ENCODE measurements at regions of chr11 and their contacts with region 1.

Region 1: DNA sequence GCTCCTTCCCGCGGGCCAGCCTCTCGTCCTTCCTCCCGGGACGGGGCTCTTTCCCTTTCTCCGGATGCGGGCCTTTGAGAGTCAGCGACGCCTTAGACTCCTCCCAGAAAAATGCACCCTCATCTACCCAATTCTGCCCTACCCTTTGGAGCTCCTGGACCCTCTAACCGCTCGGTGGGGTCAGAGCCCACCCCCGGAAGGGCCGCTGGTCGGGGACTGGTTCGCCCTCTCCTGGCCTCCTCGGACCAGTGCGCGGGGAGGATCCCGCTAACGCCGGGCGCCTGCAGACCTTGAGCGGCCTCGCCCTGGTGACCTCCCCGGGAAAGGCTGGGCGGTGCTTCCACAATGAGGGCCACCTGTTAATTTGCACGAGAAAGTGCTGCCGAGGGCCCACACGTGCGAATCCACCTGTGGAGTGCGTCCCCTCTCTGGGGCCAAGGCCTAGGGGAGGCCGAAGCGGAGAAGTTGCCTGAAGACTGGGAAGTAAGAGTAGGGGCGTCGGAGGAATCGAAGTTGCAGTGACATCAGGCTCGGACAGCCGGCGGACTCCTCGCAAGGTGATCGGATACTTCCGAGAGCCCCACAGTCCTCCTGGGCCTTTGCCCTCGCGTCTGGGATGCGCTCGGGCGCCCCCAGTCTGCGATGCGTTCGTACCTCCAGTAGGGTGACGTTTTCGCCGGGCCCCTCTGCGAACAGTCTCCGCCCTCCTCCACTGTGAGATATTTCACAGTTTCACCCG is 61.5 kb downstream of the ENDOD1 start:
- DNase-seq: peak; percentile 78
- ATAC-seq: peak; percentile 89
- H3K4me3 ChIP-seq: peak overlapping the region in 1 of 3 experiments; percentile 48; a peak in 1 of 6 replicates
- H3K27ac ChIP-seq: no peak overlapping the region
- H3K4me1 ChIP-seq: peaks cover 44% of the 10 kb centered on the region
- H3K27me3 ChIP-seq: no peaks in the 10 kb centered on the region; a peak in 1 of 5 replicates
- CTCF ChIP-seq: no peak; the same call in 1 of the 2 replicates
- EP300 ChIP-seq: no peak
- POLR2A ChIP-seq: no peak
- RAD21 ChIP-seq: peak; percentile 81

Region 2: DNA sequence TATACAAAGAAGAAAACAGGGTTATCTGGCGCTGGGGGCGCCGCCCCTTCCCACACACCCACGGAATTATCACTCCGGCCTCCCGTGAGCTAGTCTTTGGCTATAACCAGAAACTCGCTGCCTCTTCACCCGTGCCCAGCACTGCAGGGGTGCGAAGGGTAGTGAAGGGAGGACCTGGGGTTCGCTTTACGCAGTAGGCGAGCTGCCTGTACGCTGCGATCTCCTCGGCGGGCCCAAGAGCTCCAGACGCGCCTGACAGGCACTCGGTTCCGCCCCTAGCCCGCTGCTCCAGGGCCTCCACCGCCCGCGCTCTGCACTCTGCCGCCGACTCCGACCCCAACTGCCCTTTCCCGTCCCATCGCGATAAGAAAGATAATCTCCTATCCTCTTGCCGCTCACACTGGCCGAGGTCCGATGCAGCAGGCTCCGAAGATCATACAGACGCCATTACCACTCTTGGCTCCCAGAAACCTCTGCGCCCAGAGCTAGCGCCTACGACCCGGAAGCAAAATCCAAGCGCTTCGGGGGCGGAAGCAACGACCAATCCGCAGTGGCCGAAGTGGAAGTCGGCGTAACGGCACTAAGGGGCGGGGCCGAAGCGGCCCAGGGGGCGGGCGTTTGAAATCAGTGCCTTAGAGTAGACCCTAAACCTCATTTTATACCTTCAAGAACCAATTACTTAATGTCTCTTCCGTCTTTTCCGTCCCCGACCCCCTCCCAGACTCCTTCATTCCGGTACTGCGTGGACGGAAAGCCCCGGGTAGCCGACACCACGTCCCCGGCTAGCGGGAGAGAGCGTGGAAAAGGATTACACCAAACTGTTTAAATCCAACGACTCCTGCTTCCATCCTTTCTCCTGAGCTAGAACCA is 177.8 kb before region 1 on chr11 and contains the starts of genes CWC15 and KDM4D:
- CTCF ChIA-PET with region 1: no interaction called
- POLR2A ChIA-PET with region 1: no interaction called
- in situ Hi-C with region 1: no loop called
- intact Hi-C with region 1: loop called (anchors 10 kb)
- DNase-seq: peak; percentile 87
- ATAC-seq: peak; percentile 100
- H3K4me3 ChIP-seq: peak within 1 kb of the TSS; percentile 93 to 99 (median 97)
- H3K27ac ChIP-seq: peak within 1 kb of the TSS; percentile 81
- H3K4me1 ChIP-seq: peaks cover 25% of the 10 kb centered on the region
- H3K27me3 ChIP-seq: no peaks in the 10 kb centered on the region; a peak in 1 of 5 replicates
- CTCF ChIP-seq: no peak
- EP300 ChIP-seq: 0 out of 4 replicates have a peak, but pooled peaks of 1 of the 2 experiments have one; percentile 20
- POLR2A ChIP-seq: peak; percentile 81 to 87
- RAD21 ChIP-seq: 0 out of 2 replicates have a peak, but pooled peaks have one; percentile 14
- total RNA-seq, gene CWC15: 61.2 and 73.7 TPM in 2 replicates
- total RNA-seq, gene KDM4D: 1.3 and 2.0 TPM in 2 replicates

Region 3: DNA sequence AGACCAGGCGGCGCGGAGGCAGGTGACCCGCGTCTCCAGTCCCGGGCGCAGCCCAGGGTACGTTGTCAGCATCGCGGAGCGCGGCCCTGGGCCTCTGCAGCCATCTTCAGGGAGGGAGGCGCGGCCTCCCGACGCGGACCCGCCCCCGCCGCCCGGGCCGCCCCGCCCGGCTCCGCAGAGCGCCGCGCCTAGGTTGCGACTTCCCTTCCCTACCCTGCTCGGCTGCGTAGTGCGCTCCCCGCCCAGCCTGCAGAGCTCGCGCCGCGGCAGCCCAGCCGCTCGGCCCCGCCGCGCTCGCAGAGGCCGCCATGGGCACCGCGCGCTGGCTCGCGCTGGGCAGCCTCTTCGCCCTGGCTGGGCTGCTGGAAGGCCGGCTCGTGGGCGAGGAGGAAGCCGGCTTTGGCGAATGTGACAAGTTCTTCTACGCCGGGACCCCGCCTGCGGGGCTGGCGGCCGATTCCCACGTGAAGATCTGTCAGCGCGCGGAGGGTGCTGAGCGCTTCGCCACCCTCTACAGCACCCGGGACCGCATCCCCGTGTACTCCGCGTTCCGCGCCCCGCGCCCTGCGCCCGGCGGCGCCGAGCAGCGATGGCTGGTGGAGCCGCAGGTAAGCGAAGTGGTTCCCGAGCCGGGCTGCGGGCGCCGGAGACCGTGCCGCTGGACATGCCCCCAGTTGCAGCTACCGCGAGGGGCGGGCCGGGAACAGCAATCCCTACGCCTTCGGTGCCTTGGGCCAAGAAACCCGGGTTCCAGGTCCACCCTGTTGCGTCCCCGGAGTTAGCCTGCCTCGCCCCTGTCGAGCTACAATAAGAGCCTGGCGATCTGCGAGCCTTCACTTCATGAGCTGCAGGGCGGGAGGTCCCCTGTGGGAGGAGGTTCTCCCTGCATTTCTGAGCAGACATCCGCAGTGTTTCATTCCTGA is 61.2 kb before region 1 on chr11 and contains the start of gene ENDOD1:
- CTCF ChIA-PET with region 1: no interaction called
- POLR2A ChIA-PET with region 1: no interaction called
- in situ Hi-C with region 1: no loop called
- intact Hi-C with region 1: loop called (anchors 2 kb)
- DNase-seq: peak; percentile 57
- ATAC-seq: peak; percentile 95
- H3K4me3 ChIP-seq: peak within 1 kb of the TSS; percentile 84 to 86 (median 85)
- H3K27ac ChIP-seq: no peak within 1 kb of the TSS
- H3K4me1 ChIP-seq: peaks cover 44% of the 10 kb centered on the region
- H3K27me3 ChIP-seq: 0 out of 5 replicates have a peak, but pooled peaks cover 1 to 2% of the 10 kb centered on the region in 2 experiments
- CTCF ChIP-seq: 0 out of 2 replicates have a peak, but pooled peaks have one; percentile 7
- EP300 ChIP-seq: no peak
- POLR2A ChIP-seq: no peak; a peak in 1 of 4 replicates
- RAD21 ChIP-seq: no peak
- total RNA-seq, gene ENDOD1: 4.3 and 6.8 TPM in 2 replicates

Region 4: DNA sequence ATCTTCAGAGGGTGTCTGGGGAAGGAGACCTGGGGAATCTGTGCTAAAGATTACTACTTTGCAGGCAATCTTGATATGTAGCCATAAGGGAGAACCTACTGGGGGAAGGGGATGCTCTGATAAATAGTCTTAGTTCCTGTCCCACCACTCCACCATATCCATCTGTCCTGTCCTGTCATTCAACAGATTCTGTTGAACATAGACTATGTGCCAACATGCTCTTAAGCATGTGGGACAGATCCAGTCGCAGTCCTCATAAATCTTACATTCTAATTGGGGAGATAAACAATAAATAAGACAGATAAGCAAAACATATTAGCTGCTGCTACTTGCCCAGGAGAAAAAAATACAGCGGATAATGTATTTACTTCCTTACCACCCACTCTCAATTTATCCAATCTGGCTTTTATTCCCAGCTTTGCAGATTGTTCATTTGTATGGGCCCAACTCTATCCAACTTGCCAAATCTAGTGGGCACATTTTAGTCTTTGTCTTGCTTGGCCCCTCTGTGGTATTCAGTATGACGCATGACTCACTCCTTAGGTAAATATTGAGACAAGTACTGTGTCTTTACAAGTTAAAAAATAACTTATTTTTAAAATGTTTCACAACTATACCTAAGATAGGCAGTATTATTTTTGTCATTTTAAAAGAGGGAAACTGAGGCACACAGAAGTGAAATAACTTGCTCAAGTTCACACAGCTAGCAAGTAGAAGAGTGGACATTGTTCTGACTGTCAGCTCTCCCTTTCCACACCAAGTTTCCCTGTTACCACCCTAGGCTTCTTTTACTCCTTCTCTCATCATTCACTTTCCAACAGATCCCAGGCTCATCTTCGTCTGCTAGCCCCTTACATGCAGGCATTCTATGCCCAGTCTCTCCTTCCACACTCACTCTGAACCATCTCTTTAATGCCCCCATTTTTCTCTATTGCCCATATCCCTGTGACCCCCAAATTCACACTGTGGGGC is 213.5 kb after region 1 on chr11:
- CTCF ChIA-PET with region 1: no interaction called
- POLR2A ChIA-PET with region 1: no interaction called
- in situ Hi-C with region 1: loop called (anchors 10 kb)
- intact Hi-C with region 1: loop called (anchors 5 kb)
- DNase-seq: peak; percentile 79
- ATAC-seq: peak; percentile 97
- H3K4me3 ChIP-seq: peak overlapping the region in 1 of 3 experiments; percentile 25; a peak in 1 of 6 replicates
- H3K27ac ChIP-seq: no peak overlapping the region
- H3K4me1 ChIP-seq: peaks cover 48% of the 10 kb centered on the region
- H3K27me3 ChIP-seq: 0 out of 5 replicates have a peak, but pooled peaks cover 0 to 3% of the 10 kb centered on the region in 2 experiments
- CTCF ChIP-seq: no peak
- EP300 ChIP-seq: peak in 1 of 2 experiments; percentile 79; a peak in 2 of 4 replicates
- POLR2A ChIP-seq: no peak
- RAD21 ChIP-seq: no peak

Region 5: GRCh38 chr11:95764267-95764898 is 613.3 kb after region 1 on chr11:
- CTCF ChIA-PET with region 1: interaction called, 26 read pairs
- POLR2A ChIA-PET with region 1: no interaction called
- in situ Hi-C with region 1: loop called (anchors 5 kb)
- intact Hi-C with region 1: loop called (anchors 1 kb)
- DNase-seq: peak; percentile 47
- ATAC-seq: peak; percentile 71
- H3K4me3 ChIP-seq: no peak overlapping the region
- H3K27ac ChIP-seq: no peak overlapping the region
- H3K4me1 ChIP-seq: no peaks in the 10 kb centered on the region
- H3K27me3 ChIP-seq: peaks cover 0 to 4% of the 10 kb centered on the region in 2 experiments; a peak in 2 of 5 replicates
- CTCF ChIP-seq: peak; percentile 54
- EP300 ChIP-seq: no peak
- POLR2A ChIP-seq: no peak
- RAD21 ChIP-seq: no peak

Measured in HepG2 (cell line).